ENCODE measurements at regions of chr1 and their contacts with region 1.

Region 1: DNA sequence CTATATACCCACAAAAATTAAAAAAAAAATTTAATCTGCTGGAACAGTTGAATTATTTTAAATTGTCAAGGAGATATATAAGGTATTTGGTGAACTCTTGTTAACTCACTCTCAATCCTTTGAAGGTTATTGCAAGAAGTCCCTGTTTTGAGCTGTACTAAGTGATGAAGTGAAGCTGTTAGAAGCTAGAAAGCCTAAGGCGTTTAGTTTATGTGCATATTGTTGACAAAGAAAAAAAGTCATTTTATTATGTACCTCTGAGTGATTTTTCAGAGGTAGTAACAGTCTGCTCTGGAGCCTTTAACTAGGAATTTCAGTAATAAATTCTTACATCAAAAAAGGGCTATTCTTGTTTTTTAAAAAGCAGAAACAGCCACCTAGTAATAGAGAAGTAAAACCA is 59.6 kb downstream of the TMEM200B start:
- DNase-seq: no peak
- H3K4me3 ChIP-seq: no peak overlapping the region
- H3K27ac ChIP-seq: no peak overlapping the region
- H3K4me1 ChIP-seq: no peaks in the 10 kb centered on the region
- H3K27me3 ChIP-seq: no peaks in the 10 kb centered on the region
- CTCF ChIP-seq: no peak

Region 2: DNA sequence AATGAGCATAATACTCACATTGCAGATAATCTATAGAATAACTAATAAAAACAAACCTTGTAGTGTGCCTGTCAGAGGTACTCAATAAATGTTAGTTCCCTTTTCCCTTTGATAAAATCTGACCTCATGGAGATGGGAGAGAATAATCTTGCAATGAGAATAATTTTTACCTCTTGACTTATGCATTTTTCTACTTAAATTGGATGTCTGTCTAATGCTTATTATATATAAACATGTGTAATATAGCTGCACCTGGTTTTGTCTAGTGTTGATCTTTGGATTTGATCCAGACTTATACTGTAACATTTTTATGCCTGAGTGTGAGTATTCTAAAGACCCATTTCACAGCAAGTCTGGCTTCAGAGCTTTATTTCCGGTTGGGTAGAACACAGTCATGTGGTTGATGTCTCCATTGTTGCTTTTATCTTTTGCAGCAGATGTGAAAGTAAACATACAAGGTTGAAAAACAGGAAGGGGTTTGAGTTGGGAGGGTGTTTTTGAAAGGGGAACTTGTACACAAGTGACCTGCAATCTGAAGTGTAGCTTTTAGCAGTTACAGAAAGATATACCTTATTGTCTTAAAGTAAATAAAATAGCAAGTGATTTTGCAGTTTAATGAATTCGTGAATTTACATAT is 137.3 kb before region 1 on chr1:
- CTCF ChIA-PET with region 1: no interaction called
- POLR2A ChIA-PET with region 1: no interaction called
- intact Hi-C with region 1: no loop called
- DNase-seq: peak; percentile 54
- H3K4me3 ChIP-seq: peak overlapping the region; percentile 27
- H3K27ac ChIP-seq: peak overlapping the region; percentile 86
- H3K4me1 ChIP-seq: peaks cover 40% of the 10 kb centered on the region
- H3K27me3 ChIP-seq: no peaks in the 10 kb centered on the region
- CTCF ChIP-seq: no peak

Region 3: DNA sequence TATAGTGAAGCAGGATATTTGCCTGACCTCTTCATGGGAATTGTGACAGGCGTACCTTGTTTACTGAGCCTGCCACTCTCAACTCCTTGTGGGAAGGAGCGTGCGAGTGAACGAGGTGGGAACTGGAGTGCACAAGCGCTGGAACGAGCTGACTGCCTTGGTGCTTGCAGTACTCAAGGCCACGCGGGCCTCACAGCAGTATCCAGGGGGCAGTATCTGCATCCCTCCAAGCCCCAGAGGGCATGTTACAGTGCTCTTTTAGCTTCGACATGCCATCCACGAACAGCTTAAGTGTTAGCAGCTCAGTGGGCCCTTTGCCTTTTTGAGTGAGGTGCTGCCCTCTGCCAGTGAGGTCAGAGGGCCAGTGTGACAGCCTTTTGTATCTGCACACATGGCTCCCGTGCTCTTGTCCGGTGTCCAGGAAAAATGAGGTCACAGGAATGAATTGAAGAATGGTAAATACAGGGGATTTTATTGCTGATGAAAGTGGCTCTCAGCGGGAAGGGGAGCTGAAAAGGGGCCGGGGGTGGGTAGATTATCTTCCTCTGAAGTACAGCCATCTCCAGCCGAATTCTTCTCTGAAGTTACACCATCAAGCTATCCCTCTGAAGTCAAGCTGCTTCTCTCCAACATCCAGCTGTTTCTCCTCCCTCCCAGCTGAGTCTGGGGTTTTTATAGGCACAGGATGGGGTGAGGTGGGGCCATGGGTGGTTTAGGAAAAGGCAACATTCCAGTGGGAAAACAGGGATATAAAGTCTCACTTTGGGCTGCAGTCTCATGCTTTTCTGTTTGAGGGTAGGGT is 80.4 kb before region 1 on chr1:
- CTCF ChIA-PET with region 1: no interaction called
- POLR2A ChIA-PET with region 1: no interaction called
- intact Hi-C with region 1: no loop called
- DNase-seq: peak; percentile 69
- H3K4me3 ChIP-seq: no peak overlapping the region
- H3K27ac ChIP-seq: peak overlapping the region; percentile 90
- H3K4me1 ChIP-seq: peaks cover 61% of the 10 kb centered on the region
- H3K27me3 ChIP-seq: no peaks in the 10 kb centered on the region
- CTCF ChIP-seq: peak; percentile 34

Region 4: GRCh38 chr1:29017235-29017634 is 46.8 kb before region 1 on chr1:
- CTCF ChIA-PET with region 1: no interaction called
- POLR2A ChIA-PET with region 1: interaction called, 12 read pairs
- intact Hi-C with region 1: no loop called
- DNase-seq: no peak
- H3K4me3 ChIP-seq: no peak overlapping the region
- H3K27ac ChIP-seq: peak overlapping the region; percentile 39
- H3K4me1 ChIP-seq: no peaks in the 10 kb centered on the region
- H3K27me3 ChIP-seq: no peaks in the 10 kb centered on the region
- CTCF ChIP-seq: no peak

Measured in A673 (cell line).